SK-N-SH (cell line): ENCODE measurements at regions of chr10 and their contacts with region 1.

Region 1: GRCh38 chr10:102583435-102584417 is 60.6 kb upstream of the TRIM8 start:
- DNase-seq: peak; percentile 88
- H3K4me3 ChIP-seq: no peak overlapping the region; a peak in 1 of 4 replicates
- H3K27ac ChIP-seq: no peak overlapping the region; a peak in 1 of 4 replicates
- H3K4me1 ChIP-seq: no peaks in the 10 kb centered on the region; a peak in 1 of 4 replicates
- H3K27me3 ChIP-seq: no peaks in the 10 kb centered on the region
- CTCF ChIP-seq: peak; percentile 90
- EP300 ChIP-seq: no peak
- RAD21 ChIP-seq: peak; percentile 94

Region 2: GRCh38 chr10:102420810-102421644 is 162.7 kb before region 1 on chr10 and contains the start of gene FBXL15:
- CTCF ChIA-PET with region 1: interaction called, 21 read pairs
- POLR2A ChIA-PET with region 1: interaction called, 3 read pairs
- DNase-seq: peak; percentile 91
- H3K4me3 ChIP-seq: peak within 1 kb of the TSS; percentile 77 to 90
- H3K27ac ChIP-seq: peak within 1 kb of the TSS; percentile 78 to 99
- H3K4me1 ChIP-seq: peaks cover 0 to 29% of the 10 kb centered on the region in 2 experiments; a peak in 2 of 4 replicates
- H3K27me3 ChIP-seq: no peaks in the 10 kb centered on the region
- CTCF ChIP-seq: no peak
- EP300 ChIP-seq: no peak
- RAD21 ChIP-seq: no peak
- polyA plus RNA-seq, gene FBXL15: 11.7 and 17.2 TPM in 2 replicates

Region 3: GRCh38 chr10:102450194-102450938 is 133.4 kb before region 1 on chr10:
- CTCF ChIA-PET with region 1: interaction called, 14 read pairs
- POLR2A ChIA-PET with region 1: interaction called, 4 read pairs
- DNase-seq: peak; percentile 95
- H3K4me3 ChIP-seq: peak overlapping the region; percentile 62 to 71
- H3K27ac ChIP-seq: peak overlapping the region in 1 of 2 experiments; percentile 66; a peak in 2 of 4 replicates
- H3K4me1 ChIP-seq: peaks cover 0 to 10% of the 10 kb centered on the region in 2 experiments; a peak in 2 of 4 replicates
- H3K27me3 ChIP-seq: no peaks in the 10 kb centered on the region
- CTCF ChIP-seq: no peak
- EP300 ChIP-seq: no peak
- RAD21 ChIP-seq: no peak

Region 4: GRCh38 chr10:102503281-102504220 is 80.2 kb before region 1 on chr10 and contains the start of gene SUFU:
- CTCF ChIA-PET with region 1: interaction called, 110 read pairs
- POLR2A ChIA-PET with region 1: interaction called, 9 read pairs
- DNase-seq: peak; percentile 98
- H3K4me3 ChIP-seq: peak within 1 kb of the TSS; percentile 85 to 98
- H3K27ac ChIP-seq: peak within 1 kb of the TSS; percentile 45 to 78; a peak in 3 of 4 replicates
- H3K4me1 ChIP-seq: peaks cover 8 to 15% of the 10 kb centered on the region in 2 experiments; a peak in 2 of 4 replicates
- H3K27me3 ChIP-seq: no peaks in the 10 kb centered on the region
- CTCF ChIP-seq: peak; percentile 88
- EP300 ChIP-seq: no peak; a peak in 1 of 4 replicates
- RAD21 ChIP-seq: peak; percentile 86
- polyA plus RNA-seq, gene SUFU: 4.6 and 5.7 TPM in 2 replicates

Region 5: GRCh38 chr10:102511583-102512274 is 72.0 kb before region 1 on chr10:
- CTCF ChIA-PET with region 1: interaction called, 21 read pairs
- POLR2A ChIA-PET with region 1: no interaction called
- DNase-seq: no peak
- H3K4me3 ChIP-seq: no peak overlapping the region
- H3K27ac ChIP-seq: no peak overlapping the region
- H3K4me1 ChIP-seq: peaks cover 0 to 4% of the 10 kb centered on the region in 2 experiments; a peak in 1 of 4 replicates
- H3K27me3 ChIP-seq: no peaks in the 10 kb centered on the region
- CTCF ChIP-seq: no peak
- EP300 ChIP-seq: no peak
- RAD21 ChIP-seq: no peak

Region 6: DNA sequence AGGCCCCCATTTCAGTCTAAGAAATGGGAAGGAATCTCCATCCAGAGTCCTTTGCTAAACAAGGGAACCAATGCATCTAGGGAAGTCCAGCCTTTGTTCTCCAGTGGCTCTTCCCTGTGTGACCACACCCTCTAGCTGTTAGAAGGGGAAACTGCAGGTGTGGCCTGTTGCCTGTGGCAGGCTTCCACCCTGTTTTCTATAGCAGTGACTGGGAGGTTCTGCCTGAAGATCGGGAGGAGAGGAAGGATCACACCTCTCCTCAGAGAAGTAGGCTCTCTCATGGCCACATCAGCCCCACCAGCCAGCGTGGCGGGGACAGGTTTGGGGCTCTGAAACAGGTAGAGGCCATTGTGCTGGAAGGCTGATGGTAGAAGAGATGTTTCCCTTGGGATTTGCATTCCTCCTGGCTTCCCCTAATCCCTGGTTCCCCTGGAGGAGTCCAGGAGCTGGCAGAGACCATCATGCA is 12.8 kb after region 1 on chr10:
- CTCF ChIA-PET with region 1: interaction called, 29 read pairs
- POLR2A ChIA-PET with region 1: no interaction called
- DNase-seq: peak; percentile 76
- H3K4me3 ChIP-seq: no peak overlapping the region; a peak in 1 of 4 replicates
- H3K27ac ChIP-seq: no peak overlapping the region; a peak in 1 of 4 replicates
- H3K4me1 ChIP-seq: peaks cover 3 to 5% of the 10 kb centered on the region in 2 experiments; a peak in 2 of 4 replicates
- H3K27me3 ChIP-seq: no peaks in the 10 kb centered on the region
- CTCF ChIP-seq: peak; percentile 69
- EP300 ChIP-seq: no peak
- RAD21 ChIP-seq: peak; percentile 78

Region 7: GRCh38 chr10:102604379-102604960 is 20.7 kb after region 1 on chr10:
- CTCF ChIA-PET with region 1: interaction called, 16 read pairs
- POLR2A ChIA-PET with region 1: no interaction called
- DNase-seq: no peak
- H3K4me3 ChIP-seq: no peak overlapping the region; a peak in 1 of 4 replicates
- H3K27ac ChIP-seq: peak overlapping the region in 1 of 2 experiments; percentile 79; a peak in 2 of 4 replicates
- H3K4me1 ChIP-seq: peaks cover 0 to 30% of the 10 kb centered on the region in 2 experiments; a peak in 3 of 4 replicates
- H3K27me3 ChIP-seq: no peaks in the 10 kb centered on the region
- CTCF ChIP-seq: no peak
- EP300 ChIP-seq: peak in 1 of 2 experiments; percentile 38; a peak in 1 of 4 replicates
- RAD21 ChIP-seq: no peak